CD8-positive, alpha-beta T cell (primary cell): ENCODE measurements at regions of chr17 and their contacts with region 1.

Region 1: DNA sequence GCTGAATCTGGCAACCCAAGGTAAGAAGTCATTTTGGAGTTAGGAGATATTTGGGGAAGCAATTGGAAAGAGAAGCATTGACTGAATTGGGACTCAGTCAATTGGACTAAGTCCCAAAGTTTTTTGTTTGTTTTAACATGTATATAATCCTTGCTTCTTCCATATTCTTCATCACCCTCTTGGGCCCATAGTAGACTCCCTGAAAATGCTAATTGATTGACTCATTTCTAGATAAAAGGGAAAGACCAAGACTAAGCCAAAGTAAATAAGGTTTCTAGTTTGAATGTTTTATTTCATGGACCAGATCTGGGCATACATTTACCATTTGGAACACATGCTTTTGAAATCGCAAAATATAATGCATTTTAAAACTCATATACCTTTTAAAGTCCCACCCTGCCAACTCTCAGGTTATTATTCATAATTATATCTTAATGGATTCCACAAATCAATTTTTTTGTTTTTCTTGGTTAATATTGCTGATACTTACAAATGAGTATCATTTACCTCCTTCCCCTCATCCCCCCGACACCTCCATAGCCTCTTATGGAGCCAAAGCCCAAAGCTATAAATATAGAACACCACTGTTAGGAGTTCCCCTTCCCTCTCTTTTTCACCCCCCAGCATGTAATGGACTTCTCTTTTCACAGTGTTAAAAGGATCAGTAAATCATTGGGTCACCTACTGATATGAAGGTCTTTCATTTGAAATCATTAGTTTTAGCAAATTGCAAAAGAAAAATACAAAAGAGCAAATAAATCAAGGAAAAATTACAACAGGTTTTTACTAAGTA is 674.0 kb upstream of the SOX9 start:
- DNase-seq: no peak
- ATAC-seq: no peak
- H3K4me3 ChIP-seq: no peak overlapping the region
- H3K4me3 Mint-ChIP-seq: no peak overlapping the region
- H3K27ac ChIP-seq: no peak overlapping the region
- H3K27ac Mint-ChIP-seq: no peak overlapping the region
- H3K4me1 ChIP-seq: no peaks in the 10 kb centered on the region
- H3K4me1 Mint-ChIP-seq: no peaks in the 10 kb centered on the region
- H3K27me3 ChIP-seq: no peaks in the 10 kb centered on the region
- H3K27me3 Mint-ChIP-seq: no peaks in the 10 kb centered on the region
- CTCF ChIP-seq: no peak

Region 2: GRCh38 chr17:71505200-71505599 is 58.4 kb after region 1 on chr17:
- CTCF ChIA-PET with region 1: no interaction called
- POLR2A ChIA-PET with region 1: no interaction called
- intact Hi-C with region 1: loop called in 1 of 2 experiments (anchors 5 kb)
- DNase-seq: no peak
- ATAC-seq: no peak
- H3K4me3 ChIP-seq: no peak overlapping the region
- H3K4me3 Mint-ChIP-seq: no peak overlapping the region
- H3K27ac ChIP-seq: no peak overlapping the region
- H3K27ac Mint-ChIP-seq: no peak overlapping the region
- H3K4me1 ChIP-seq: no peaks in the 10 kb centered on the region
- H3K4me1 Mint-ChIP-seq: no peaks in the 10 kb centered on the region
- H3K27me3 ChIP-seq: no peaks in the 10 kb centered on the region
- H3K27me3 Mint-ChIP-seq: no peaks in the 10 kb centered on the region
- CTCF ChIP-seq: no peak